ENCODE measurements at regions of chr7 and their contacts with region 1.

Region 1: DNA sequence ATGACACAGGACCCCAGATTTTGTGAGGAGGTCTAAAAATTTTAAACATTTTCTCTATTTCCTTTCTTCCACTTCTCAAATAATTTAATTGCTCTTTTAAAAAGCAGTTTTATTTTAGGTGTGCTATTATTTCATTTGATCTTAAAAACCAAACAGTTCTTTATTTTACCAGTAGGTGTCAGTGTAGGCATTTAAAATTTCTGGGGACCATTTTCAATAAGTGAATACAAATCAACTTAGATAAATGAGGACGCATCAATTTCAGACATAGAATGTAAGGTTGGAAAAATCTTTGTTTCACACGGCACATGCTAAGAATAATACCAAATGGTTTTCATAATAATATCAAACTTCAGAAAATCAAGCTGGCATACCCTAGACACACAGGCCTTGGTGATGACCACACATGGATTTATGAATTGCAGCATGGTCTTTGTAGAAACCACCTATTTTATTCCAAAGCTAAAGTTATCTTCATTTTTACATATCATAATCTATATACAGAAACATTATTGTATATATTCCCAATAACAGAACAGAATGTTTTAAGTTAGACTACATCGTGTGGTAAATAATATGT is 127.6 kb upstream of the SLC26A5 start:
- DNase-seq: peak; percentile 78
- ATAC-seq: no peak; the same call in none of the 2 replicates
- H3K4me3 ChIP-seq: no peak overlapping the region
- H3K27ac ChIP-seq: no peak overlapping the region
- H3K4me1 ChIP-seq: no peaks in the 10 kb centered on the region
- H3K27me3 ChIP-seq: no peaks in the 10 kb centered on the region
- CTCF ChIP-seq: peak; percentile 80

Region 2: DNA sequence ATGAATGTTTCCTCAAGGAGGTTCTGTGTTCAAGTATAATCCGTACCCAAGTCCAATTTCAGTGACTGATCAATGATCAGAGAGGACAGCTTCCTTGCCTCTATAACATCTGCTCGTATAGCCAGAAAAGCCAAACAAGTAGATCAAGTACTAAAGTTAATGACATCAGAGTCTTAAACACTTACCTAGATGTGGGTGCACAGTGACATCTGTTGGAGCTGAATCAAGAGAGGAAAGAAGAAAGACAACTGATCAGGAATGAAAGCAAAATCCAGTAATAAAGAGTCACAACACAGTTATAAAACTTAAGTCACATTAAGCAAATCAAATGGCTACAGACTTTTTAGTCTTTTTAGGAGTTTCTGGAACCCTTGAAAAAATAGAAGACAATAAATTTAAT is 179.4 kb after region 1 on chr7:
- CTCF ChIA-PET with region 1: interaction called, 6 read pairs
- POLR2A ChIA-PET with region 1: no interaction called
- intact Hi-C with region 1: loop called (anchors 1 kb)
- DNase-seq: peak; percentile 69
- ATAC-seq: peak; percentile 90
- H3K4me3 ChIP-seq: no peak overlapping the region
- H3K27ac ChIP-seq: no peak overlapping the region
- H3K4me1 ChIP-seq: peaks cover 3% of the 10 kb centered on the region; the same call in 1 of the 2 replicates
- H3K27me3 ChIP-seq: no peaks in the 10 kb centered on the region
- CTCF ChIP-seq: peak; percentile 65

Region 3: DNA sequence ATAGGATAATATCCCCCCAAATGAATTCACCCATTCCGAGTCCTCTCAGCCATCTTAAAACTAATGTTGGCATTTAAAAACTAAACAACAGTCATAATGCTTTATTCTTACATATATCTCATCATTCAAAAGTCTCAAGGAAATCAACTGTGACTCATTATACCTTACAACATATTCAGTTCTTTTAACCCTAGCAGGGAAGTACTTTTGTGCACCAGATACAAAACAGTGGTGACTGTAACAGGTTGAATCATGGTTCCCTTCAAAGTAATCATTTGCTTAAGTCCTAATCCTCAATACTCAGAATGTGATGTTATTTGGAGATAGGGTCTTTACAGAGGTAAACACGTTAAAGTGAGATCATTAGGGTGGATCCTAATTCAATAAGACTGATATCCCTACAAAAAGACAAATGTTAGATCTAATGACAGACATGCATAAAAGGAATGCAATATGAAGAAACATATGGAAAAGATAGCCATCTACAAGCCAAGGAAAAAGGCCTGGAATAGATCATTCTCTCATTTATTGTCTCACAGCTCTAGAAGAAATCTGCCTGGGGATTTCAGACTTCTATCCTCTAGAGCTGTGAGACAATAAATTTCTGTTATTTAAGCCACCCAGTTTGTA is 373.6 kb after region 1 on chr7:
- CTCF ChIA-PET with region 1: no interaction called
- POLR2A ChIA-PET with region 1: no interaction called
- intact Hi-C with region 1: no loop called
- DNase-seq: no peak
- ATAC-seq: no peak; the same call in 1 of the 2 replicates
- H3K4me3 ChIP-seq: no peak overlapping the region
- H3K27ac ChIP-seq: no peak overlapping the region
- H3K4me1 ChIP-seq: no peaks in the 10 kb centered on the region
- H3K27me3 ChIP-seq: no peaks in the 10 kb centered on the region
- CTCF ChIP-seq: no peak

Region 4: GRCh38 chr7:104096683-104097082 is 523.1 kb after region 1 on chr7:
- CTCF ChIA-PET with region 1: interaction called, 5 read pairs
- POLR2A ChIA-PET with region 1: no interaction called
- intact Hi-C with region 1: loop called (anchors 2 kb)
- DNase-seq: peak; percentile 63
- ATAC-seq: peak; percentile 93
- H3K4me3 ChIP-seq: no peak overlapping the region
- H3K27ac ChIP-seq: no peak overlapping the region
- H3K4me1 ChIP-seq: no peaks in the 10 kb centered on the region
- H3K27me3 ChIP-seq: no peaks in the 10 kb centered on the region
- CTCF ChIP-seq: peak; percentile 54